Activated CD8-positive, alpha-beta T cell treated with anti-CD3 and anti-CD28 coated beads for 36 hours (primary cell): ENCODE measurements at regions of chr2 and their contacts with region 1.

Region 1: GRCh38 chr2:8681786-8682692 is at the start of gene ID2:
- DNase-seq: peak; percentile 99
- ATAC-seq: peak; percentile 76
- H3K4me3 Mint-ChIP-seq: peak within 1 kb of the TSS; percentile 95
- H3K27ac Mint-ChIP-seq: peak within 1 kb of the TSS; percentile 92
- H3K4me1 Mint-ChIP-seq: peaks cover 40% of the 10 kb centered on the region
- H3K27me3 Mint-ChIP-seq: peaks cover 10% of the 10 kb centered on the region
- CTCF ChIP-seq: no peak
- total RNA-seq, gene ID2: 85.7 to 91.6 TPM

Region 2: GRCh38 chr2:7203055-7203467 is 1479.0 kb before region 1 on chr2:
- CTCF ChIA-PET with region 1: no interaction called
- POLR2A ChIA-PET with region 1: no interaction called
- intact Hi-C with region 1: loop called (anchors 5 kb)
- DNase-seq: peak; percentile 77
- ATAC-seq: peak; percentile 78
- H3K4me3 Mint-ChIP-seq: no peak overlapping the region
- H3K27ac Mint-ChIP-seq: no peak overlapping the region
- H3K4me1 Mint-ChIP-seq: no peaks in the 10 kb centered on the region
- H3K27me3 Mint-ChIP-seq: no peaks in the 10 kb centered on the region
- CTCF ChIP-seq: peak; percentile 87

Region 3: GRCh38 chr2:7725171-7725849 is 956.7 kb before region 1 on chr2:
- CTCF ChIA-PET with region 1: no interaction called
- POLR2A ChIA-PET with region 1: interaction called, 28 read pairs
- intact Hi-C with region 1: loop called (anchors 10 kb)
- DNase-seq: peak; percentile 46
- ATAC-seq: peak; percentile 72
- H3K4me3 Mint-ChIP-seq: peak overlapping the region; percentile 81
- H3K27ac Mint-ChIP-seq: peak overlapping the region; percentile 90
- H3K4me1 Mint-ChIP-seq: peaks cover 37% of the 10 kb centered on the region
- H3K27me3 Mint-ChIP-seq: no peaks in the 10 kb centered on the region
- CTCF ChIP-seq: no peak

Region 4: DNA sequence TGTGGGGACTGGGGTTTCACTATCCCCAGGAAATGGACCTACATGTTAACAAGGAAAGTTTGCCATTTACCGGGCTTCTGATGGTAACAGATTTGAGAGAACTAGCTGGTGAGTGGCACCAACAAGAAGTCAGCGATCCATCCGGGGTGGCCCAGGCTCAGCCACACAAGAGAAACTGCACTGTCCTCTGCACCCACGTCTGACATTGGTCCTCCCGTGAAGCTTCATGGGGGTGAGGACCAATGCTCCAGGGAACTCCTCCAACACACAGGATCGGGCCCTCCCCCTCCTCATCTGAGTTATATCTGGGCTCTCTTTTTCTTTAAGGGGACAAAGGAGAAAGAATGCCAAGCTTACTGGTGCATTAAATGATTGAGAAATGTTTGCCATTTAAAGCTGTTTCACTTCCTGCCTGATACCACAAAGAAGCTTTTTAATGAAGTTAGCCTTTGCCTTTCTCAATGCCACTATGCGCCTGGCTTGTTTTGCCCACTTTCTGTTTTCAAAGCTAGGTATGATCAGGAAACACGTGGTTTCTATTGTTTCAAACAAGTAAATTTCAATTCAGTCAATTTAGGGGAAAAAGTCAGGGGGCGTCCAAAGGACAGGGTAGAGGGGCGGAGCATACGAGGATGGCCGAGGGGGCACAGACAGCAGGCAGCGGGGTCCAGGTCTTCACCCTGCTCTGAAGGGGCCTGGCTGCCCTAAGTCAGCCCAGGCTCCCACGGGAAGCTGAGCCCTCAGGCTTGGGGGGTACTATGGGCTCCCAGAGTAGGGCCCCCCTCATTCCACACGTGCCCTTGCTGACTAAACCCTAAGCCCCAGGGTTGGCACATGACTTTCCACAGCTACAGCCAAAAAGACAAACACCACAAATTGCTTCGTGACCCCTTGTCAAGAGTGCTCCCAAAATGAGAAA is 204.2 kb before region 1 on chr2:
- CTCF ChIA-PET with region 1: no interaction called
- POLR2A ChIA-PET with region 1: interaction called, 14 read pairs
- intact Hi-C with region 1: loop called (anchors 5 kb)
- DNase-seq: peak; percentile 68
- ATAC-seq: peak; percentile 44
- H3K4me3 Mint-ChIP-seq: peak overlapping the region; percentile 8
- H3K27ac Mint-ChIP-seq: peak overlapping the region; percentile 78
- H3K4me1 Mint-ChIP-seq: peaks cover 86% of the 10 kb centered on the region
- H3K27me3 Mint-ChIP-seq: peaks cover 6% of the 10 kb centered on the region
- CTCF ChIP-seq: no peak

Region 5: DNA sequence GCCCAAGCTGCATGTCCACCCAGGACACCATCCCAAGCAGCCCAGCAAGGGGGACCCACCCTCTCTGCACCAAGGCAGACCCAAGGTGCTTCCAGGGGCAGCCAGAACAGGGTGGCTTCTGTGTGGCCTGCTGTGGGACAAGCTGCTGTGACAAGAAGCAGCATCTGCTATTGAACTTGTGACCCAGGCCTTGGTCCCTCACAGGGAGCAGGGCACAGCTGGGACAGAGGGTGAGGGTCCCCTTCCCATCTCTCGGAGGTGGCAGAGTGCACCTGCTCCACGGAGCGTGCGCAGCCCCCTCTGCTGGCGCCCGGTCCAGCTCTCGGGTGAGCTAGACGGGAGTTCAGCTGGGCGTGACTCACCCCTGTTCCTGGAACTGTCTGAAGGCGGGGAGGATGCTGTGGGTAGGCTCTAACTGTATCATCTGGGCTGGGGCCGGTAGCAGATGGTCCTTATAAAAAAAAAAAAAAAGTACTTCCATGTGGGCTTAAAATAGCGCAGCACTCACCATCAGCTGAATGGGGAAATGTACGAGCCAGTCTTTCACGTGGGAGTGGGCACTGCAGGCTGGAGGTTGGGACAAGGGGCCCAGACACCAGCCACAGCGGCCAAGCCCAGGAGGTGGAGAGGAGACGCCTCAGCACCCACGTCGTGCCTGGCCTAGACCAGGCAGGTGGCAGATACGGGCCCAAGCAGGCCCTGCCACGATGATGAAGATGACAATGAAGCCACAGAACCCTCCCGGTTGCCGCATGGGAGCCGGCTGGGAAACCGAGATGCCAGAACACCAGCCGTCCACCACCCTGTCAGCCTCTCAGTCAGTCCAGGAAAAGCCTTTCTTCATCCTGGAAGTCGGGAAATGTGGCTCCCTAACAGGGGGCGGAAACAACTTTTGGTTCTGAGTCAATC is 137.0 kb before region 1 on chr2:
- CTCF ChIA-PET with region 1: interaction called, 8 read pairs
- POLR2A ChIA-PET with region 1: interaction called, 54 read pairs
- intact Hi-C with region 1: loop called (anchors 5 kb)
- DNase-seq: peak; percentile 96
- ATAC-seq: peak; percentile 73
- H3K4me3 Mint-ChIP-seq: no peak overlapping the region
- H3K27ac Mint-ChIP-seq: peak overlapping the region; percentile 97
- H3K4me1 Mint-ChIP-seq: peaks cover 71% of the 10 kb centered on the region
- H3K27me3 Mint-ChIP-seq: peaks cover 1% of the 10 kb centered on the region
- CTCF ChIP-seq: peak; percentile 52

Region 6: DNA sequence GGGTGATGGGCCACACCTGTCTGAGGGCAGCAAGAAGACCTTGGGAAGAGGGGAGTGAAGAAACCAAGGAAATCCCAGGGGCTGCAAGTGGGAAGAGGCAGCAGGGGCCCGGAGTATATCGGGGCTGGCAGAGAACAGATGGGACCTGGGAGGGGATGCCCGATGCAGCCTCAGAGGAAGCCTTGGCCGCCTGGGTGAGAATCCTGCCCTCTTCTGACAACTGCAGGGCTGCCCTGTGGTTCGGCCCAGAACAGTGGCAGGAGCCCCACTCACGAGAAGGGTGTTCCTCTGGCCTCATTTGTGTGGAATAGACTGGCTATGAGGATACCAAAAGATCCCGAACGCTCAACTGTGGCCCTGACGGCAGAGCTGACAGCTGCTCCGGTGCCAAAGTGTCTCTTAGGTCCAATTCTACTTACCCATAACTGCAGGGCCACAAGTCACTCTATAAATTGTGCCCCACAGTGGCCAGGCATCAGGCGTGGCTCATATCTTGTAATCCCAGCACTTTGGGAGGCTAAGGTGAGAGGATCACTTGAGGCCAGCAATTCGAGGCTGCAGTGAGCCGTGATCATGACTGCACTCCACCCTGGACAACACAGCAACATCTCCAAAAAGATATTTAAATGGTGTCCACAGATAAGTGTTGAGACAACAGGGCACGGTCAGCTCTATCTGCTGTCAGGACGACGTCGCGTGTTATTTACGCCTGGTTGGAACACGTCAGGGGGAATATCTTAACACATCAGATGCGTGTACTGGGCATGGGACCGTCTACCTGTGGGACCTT is 23.8 kb before region 1 on chr2:
- CTCF ChIA-PET with region 1: no interaction called
- POLR2A ChIA-PET with region 1: no interaction called
- intact Hi-C with region 1: no loop called
- DNase-seq: no peak
- ATAC-seq: no peak
- H3K4me3 Mint-ChIP-seq: no peak overlapping the region
- H3K27ac Mint-ChIP-seq: no peak overlapping the region
- H3K4me1 Mint-ChIP-seq: peaks cover 15% of the 10 kb centered on the region
- H3K27me3 Mint-ChIP-seq: peaks cover 20% of the 10 kb centered on the region
- CTCF ChIP-seq: no peak